Activated CD4-positive, alpha-beta T cell treated with anti-CD3 and anti-CD28 coated beads, Interleukin-2, amount 10 ng/mL, durations not matched to agents 24 days and 14 days (primary cell): ENCODE measurements at regions of chr1 and their contacts with region 1.

Region 1: DNA sequence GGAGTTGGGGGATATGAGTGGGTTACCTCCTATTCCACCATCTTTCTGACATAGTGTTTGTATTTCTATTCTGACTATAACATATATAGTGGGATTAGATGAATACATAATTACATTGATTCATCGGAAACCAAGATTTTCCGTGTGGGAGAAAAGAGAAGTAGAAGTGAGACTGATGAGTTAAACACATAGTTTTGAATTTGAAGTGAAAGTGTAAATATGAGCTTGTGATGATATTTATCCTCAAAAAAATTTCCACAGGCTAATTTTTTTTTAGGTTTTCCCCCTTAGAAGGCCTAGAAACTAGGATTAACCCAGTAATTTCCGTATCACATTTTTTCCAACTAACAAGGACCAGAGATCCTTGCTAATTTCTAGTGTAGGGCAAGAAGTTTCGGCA is 6.9 kb downstream of the CD1B start:
- DNase-seq: no peak
- H3K4me3 Mint-ChIP-seq: no peak overlapping the region
- H3K27ac Mint-ChIP-seq: no peak overlapping the region
- H3K4me1 Mint-ChIP-seq: no peaks in the 10 kb centered on the region
- H3K27me3 Mint-ChIP-seq: no peaks in the 10 kb centered on the region

Region 2: DNA sequence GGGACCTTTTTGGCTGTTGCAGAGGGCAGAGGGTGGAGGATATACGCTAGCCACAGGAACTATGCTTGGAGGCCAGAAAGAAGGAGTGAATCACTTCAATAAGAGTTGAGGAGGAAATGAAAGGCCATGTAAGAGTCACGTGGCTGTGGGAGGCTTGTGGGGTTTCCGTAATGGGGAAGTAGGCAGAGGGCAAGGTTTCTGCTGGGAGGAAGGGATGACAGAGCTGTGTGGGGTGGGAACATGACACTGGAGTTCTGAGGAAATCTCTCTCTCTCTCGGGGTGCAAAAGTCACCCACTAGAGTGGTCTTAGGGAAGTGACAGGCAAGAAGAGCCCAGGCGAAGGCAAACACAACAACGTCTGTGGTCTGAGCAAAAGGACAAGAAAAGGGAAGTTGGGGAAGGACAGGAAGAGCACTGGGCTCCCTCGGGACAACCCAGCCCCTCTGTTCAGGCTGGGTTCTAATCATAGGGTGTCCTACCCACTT is 38.6 kb before region 1 on chr1:
- intact Hi-C with region 1: loop called (anchors 5 kb)
- DNase-seq: no peak
- H3K4me3 Mint-ChIP-seq: peak overlapping the region; percentile 34
- H3K27ac Mint-ChIP-seq: peak overlapping the region; percentile 82
- H3K4me1 Mint-ChIP-seq: peaks cover 15% of the 10 kb centered on the region
- H3K27me3 Mint-ChIP-seq: no peaks in the 10 kb centered on the region

Region 3: GRCh38 chr1:158371188-158371953 is 47.0 kb after region 1 on chr1:
- intact Hi-C with region 1: no loop called
- DNase-seq: peak; percentile 56
- H3K4me3 Mint-ChIP-seq: no peak overlapping the region
- H3K27ac Mint-ChIP-seq: no peak overlapping the region
- H3K4me1 Mint-ChIP-seq: peaks cover 9% of the 10 kb centered on the region
- H3K27me3 Mint-ChIP-seq: no peaks in the 10 kb centered on the region